CD4-positive, alpha-beta T cell (primary cell): ENCODE measurements at regions of chr19 and their contacts with region 1.

Region 1: DNA sequence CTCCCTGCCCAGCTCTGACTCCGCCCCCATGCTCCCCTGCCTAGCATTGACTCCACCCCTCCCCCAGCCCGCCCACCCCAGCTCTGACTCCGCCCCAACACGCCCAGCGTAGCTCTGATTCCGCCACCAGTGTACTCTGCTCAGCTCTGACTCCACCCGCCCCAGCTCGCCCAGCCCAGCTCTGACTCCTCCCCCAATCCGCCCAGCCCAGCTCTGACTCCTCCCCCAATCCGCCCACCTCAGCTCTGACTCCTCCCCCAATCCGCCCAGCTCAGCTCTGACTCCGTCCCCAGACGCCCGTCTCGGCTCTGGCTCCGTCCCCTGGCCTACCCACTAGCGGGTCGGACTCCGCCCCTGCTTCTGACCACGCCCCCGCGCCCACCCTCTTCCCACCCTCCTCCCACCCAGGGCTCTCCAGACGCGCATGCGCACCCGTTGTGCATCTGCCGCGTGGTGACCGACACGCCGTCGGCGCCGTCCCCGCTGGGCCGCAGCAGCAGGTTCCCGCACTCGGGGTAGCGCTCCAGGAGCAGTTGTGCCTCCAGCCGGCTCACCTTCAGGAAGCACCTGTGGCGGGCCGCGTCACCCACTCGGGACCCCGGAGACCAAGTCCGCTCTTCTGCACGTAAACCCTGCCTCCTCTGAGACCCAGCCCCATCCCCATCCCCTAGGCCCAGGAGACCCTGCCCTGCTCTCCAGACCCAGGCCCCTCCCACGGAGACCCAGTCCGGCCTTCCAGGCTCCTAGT is 10.2 kb downstream of the STAP2 start:
- DNase-seq: peak; percentile 84 to 99 (median 96)
- ATAC-seq: peak; percentile 83
- H3K4me3 ChIP-seq: peak overlapping the region; percentile 61
- H3K4me3 Mint-ChIP-seq: peak overlapping the region; percentile 90
- H3K27ac ChIP-seq: no peak overlapping the region
- H3K27ac Mint-ChIP-seq: peak overlapping the region; percentile 86
- H3K4me1 ChIP-seq: peaks cover 31% of the 10 kb centered on the region
- H3K4me1 Mint-ChIP-seq: peaks cover 25% of the 10 kb centered on the region
- H3K27me3 ChIP-seq: no peaks in the 10 kb centered on the region
- H3K27me3 Mint-ChIP-seq: no peaks in the 10 kb centered on the region
- CTCF ChIP-seq: no peak

Region 2: GRCh38 chr19:4256563-4256962 is 71.9 kb before region 1 on chr19:
- CTCF ChIA-PET with region 1: no interaction called
- POLR2A ChIA-PET with region 1: no interaction called
- intact Hi-C with region 1: no loop called
- DNase-seq: no peak
- ATAC-seq: no peak
- H3K4me3 ChIP-seq: no peak overlapping the region
- H3K4me3 Mint-ChIP-seq: no peak overlapping the region
- H3K27ac ChIP-seq: no peak overlapping the region
- H3K27ac Mint-ChIP-seq: no peak overlapping the region
- H3K4me1 ChIP-seq: no peaks in the 10 kb centered on the region
- H3K4me1 Mint-ChIP-seq: no peaks in the 10 kb centered on the region
- H3K27me3 ChIP-seq: no peaks in the 10 kb centered on the region
- H3K27me3 Mint-ChIP-seq: no peaks in the 10 kb centered on the region
- CTCF ChIP-seq: no peak

Region 3: DNA sequence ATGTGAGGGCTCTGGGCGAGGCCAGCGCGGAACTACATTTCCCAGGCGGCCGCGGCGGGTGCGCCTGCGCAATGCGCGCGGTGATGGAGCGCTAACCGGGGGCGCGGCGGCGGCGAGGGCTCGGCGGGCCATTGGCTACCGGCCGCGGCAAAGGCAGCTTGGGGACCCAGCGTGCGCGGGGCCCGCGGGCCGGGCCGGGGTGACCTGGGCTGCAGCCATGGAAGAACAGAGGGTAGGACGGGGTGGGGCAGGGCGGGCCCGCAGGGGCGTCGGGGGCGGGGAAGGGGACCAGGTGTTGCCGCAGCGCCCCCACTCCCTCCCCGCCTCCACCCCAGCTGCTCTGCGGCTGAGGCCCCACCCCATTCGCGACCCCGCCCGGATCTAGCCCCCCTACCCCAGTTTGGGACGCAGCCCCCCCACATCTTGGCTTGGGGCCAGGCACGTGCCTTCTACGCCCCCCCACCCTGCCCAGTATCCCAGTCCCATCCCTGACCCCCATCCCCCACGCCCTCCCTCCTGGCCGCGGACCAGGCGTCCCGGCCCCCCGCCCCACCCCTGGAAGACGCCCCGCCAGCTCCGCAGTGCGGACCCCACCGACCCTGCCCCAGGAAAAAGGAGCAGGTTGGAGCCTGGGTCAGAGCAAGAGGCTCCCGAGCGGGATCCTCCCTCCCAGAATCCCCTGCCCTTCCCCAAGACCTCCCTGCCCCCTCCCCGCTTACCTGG is 23.7 kb before region 1 on chr19 and contains the start of gene FSD1:
- CTCF ChIA-PET with region 1: no interaction called
- POLR2A ChIA-PET with region 1: interaction called, 8 read pairs
- intact Hi-C with region 1: loop called in 1 of 2 experiments (anchors 2 kb)
- DNase-seq: peak; percentile 28 to 76 (median 52)
- ATAC-seq: peak; percentile 45
- H3K4me3 ChIP-seq: peak within 1 kb of the TSS; percentile 20
- H3K4me3 Mint-ChIP-seq: peak within 1 kb of the TSS; percentile 56
- H3K27ac ChIP-seq: no peak within 1 kb of the TSS
- H3K27ac Mint-ChIP-seq: peak within 1 kb of the TSS; percentile 88
- H3K4me1 ChIP-seq: peaks cover 36% of the 10 kb centered on the region
- H3K4me1 Mint-ChIP-seq: peaks cover 34% of the 10 kb centered on the region
- H3K27me3 ChIP-seq: peaks cover 0 to 3% of the 10 kb centered on the region in 2 experiments
- H3K27me3 Mint-ChIP-seq: no peaks in the 10 kb centered on the region
- CTCF ChIP-seq: no peak
- total RNA-seq, gene FSD1: 0.98 to 1.0 TPM

Region 4: DNA sequence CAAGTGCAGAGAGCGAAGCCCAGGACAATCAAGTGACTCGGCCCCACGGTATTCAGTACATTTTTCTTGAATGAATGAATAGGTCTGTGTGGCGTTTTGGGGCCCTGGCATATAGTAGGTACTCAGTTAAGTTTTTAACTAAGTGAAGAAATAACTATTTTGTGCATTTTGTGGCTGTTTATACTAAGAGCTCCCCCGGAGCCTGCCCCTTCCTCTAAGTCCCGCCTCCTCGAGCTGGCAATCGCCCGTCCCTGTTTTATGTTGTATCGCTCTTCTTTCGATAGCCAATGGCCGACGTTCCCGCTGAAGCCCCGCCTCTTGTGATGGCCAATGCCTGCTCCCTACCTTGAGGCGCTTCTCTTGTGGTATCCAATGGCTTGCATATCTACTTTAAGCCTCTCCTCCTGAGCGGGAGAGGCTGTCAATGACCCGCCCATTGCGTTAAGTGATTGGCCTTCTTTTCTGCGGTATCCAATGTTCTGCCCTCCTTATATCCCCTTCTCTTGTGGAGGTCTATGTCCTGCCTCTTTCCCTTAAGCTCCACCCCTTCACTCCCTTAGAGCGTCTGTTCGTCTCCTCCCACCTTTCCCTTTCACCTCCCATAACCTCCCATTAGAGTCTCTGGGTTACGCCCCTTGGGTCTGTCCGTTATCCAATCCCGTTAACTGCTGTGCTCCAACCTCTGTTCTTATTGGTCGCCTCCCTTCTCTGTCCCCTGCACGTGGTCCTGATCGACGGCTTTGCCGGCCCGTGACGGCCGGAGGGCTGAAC is 143.2 kb after region 1 on chr19:
- CTCF ChIA-PET with region 1: no interaction called
- POLR2A ChIA-PET with region 1: interaction called, 4 read pairs
- intact Hi-C with region 1: loop called in 1 of 2 experiments (anchors 5 kb)
- DNase-seq: peak; percentile 92 to 100 (median 96)
- ATAC-seq: peak; percentile 84
- H3K4me3 ChIP-seq: peak overlapping the region; percentile 64
- H3K4me3 Mint-ChIP-seq: no peak overlapping the region
- H3K27ac ChIP-seq: peak overlapping the region; percentile 71 to 72
- H3K27ac Mint-ChIP-seq: no peak overlapping the region
- H3K4me1 ChIP-seq: peaks cover 35% of the 10 kb centered on the region
- H3K4me1 Mint-ChIP-seq: peaks cover 22% of the 10 kb centered on the region
- H3K27me3 ChIP-seq: no peaks in the 10 kb centered on the region
- H3K27me3 Mint-ChIP-seq: no peaks in the 10 kb centered on the region
- CTCF ChIP-seq: no peak